ENCODE measurements at regions of chr4 and their contacts with region 1.

Region 1: GRCh38 chr4:54233277-54233696 is 4.2 kb downstream of the PDGFRA start:
- DNase-seq: no peak
- H3K4me3 ChIP-seq: no peak overlapping the region
- H3K27ac ChIP-seq: no peak overlapping the region
- H3K4me1 ChIP-seq: no peaks in the 10 kb centered on the region
- CTCF ChIP-seq: peak; percentile 71

Region 2: DNA sequence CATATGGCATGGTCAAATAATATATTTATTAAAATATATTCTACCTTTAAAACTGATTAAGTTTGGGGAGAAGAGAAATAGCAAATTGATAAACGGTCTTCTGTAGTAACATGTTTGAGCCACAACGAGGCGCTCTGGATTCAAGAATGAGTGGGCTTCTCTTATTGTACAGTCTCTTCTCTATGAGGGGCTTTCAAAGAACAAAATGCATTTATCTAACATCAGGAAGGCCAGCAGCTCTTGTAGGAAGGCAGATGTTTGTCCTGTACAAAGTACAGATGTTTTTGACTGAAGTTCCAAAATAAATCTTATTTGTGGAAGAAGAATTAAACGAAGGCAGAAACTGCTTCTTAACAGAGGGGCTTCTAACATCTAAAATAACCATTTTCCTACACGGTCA is 1217.6 kb before region 1 on chr4:
- CTCF ChIA-PET with region 1: no interaction called
- POLR2A ChIA-PET with region 1: no interaction called
- intact Hi-C with region 1: loop called (anchors 10 kb)
- DNase-seq: peak; percentile 42
- H3K4me3 ChIP-seq: no peak overlapping the region
- H3K27ac ChIP-seq: no peak overlapping the region
- H3K4me1 ChIP-seq: no peaks in the 10 kb centered on the region
- CTCF ChIP-seq: peak; percentile 83

Region 3: DNA sequence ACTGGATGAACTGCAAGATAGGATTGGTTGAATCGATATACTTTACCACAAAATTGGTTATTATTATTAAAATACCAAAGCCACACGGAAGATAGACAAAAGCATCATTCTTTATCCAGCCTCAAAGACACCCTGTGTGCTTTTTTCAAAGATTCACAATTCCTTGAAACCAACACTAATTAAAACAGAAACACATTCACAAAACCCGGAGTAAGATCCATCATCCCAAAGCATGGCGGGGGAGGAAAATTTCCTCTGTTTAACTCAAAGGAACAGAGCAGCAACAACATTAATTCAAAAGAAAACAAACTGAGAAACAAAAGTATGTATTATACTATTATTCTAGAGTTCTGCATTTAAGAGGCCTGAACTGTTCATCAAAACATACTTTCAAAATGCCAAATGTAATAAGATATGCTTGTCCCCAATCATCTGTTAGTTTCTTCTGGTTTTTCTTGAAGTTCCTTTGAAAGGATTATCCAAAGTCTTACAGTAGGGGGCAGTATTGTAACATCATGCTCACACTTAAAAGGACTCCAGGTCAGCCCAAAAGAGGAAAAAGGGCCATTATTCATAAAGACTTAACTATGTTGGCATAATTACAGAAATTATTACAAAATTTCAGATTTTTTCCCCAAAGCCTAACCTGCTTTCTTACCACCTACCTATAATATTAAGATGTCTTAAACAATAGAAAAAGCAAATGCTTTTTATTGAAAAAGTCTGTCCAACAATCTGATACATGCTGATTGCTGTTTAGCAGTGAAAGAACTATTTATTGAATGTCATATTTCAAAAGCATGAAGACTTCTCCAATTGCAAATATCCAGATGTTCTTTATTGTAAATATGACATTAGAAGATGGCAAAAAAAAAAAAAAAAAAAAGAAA is 1036.2 kb before region 1 on chr4:
- CTCF ChIA-PET with region 1: no interaction called
- POLR2A ChIA-PET with region 1: no interaction called
- intact Hi-C with region 1: loop called (anchors 5 kb)
- DNase-seq: peak; percentile 80
- H3K4me3 ChIP-seq: no peak overlapping the region
- H3K27ac ChIP-seq: no peak overlapping the region
- H3K4me1 ChIP-seq: no peaks in the 10 kb centered on the region
- CTCF ChIP-seq: peak; percentile 95

Region 4: GRCh38 chr4:53490965-53491622 is 742.2 kb before region 1 on chr4:
- CTCF ChIA-PET with region 1: interaction called, 3 read pairs
- POLR2A ChIA-PET with region 1: no interaction called
- intact Hi-C with region 1: loop called (anchors 10 kb)
- DNase-seq: peak; percentile 45
- H3K4me3 ChIP-seq: no peak overlapping the region
- H3K27ac ChIP-seq: no peak overlapping the region
- H3K4me1 ChIP-seq: no peaks in the 10 kb centered on the region
- CTCF ChIP-seq: peak; percentile 83

Region 5: DNA sequence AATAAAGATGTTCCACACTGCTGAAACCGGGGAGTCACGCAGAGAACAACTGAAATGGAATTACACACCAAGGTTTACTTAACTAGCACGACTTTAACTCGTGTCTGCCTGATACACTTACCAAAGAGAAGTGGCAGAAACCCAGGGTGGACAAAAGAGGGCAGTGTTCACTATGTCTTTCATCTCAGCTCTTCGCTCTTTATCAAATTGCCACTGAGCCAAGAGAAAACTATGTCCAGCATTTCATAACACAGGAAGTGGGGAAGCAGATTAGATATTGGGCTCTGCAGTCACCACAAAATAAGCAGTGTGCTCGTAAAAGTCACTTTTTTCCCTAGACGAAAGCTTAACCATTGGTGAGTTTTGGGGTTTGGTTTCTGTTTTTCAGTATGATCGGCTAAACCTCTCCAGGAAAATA is 324.6 kb before region 1 on chr4:
- CTCF ChIA-PET with region 1: interaction called, 4 read pairs
- POLR2A ChIA-PET with region 1: interaction called, 4 read pairs
- intact Hi-C with region 1: loop called (anchors 1 kb)
- DNase-seq: peak; percentile 72
- H3K4me3 ChIP-seq: no peak overlapping the region
- H3K27ac ChIP-seq: no peak overlapping the region
- H3K4me1 ChIP-seq: peaks cover 21% of the 10 kb centered on the region
- CTCF ChIP-seq: peak; percentile 91

Region 6: GRCh38 chr4:53929955-53930798 is 303.1 kb before region 1 on chr4:
- CTCF ChIA-PET with region 1: interaction called, 6 read pairs
- POLR2A ChIA-PET with region 1: no interaction called
- intact Hi-C with region 1: loop called (anchors 5 kb)
- DNase-seq: peak; percentile 82
- H3K4me3 ChIP-seq: no peak overlapping the region
- H3K27ac ChIP-seq: no peak overlapping the region
- H3K4me1 ChIP-seq: peaks cover 32% of the 10 kb centered on the region
- CTCF ChIP-seq: peak; percentile 95

Region 7: DNA sequence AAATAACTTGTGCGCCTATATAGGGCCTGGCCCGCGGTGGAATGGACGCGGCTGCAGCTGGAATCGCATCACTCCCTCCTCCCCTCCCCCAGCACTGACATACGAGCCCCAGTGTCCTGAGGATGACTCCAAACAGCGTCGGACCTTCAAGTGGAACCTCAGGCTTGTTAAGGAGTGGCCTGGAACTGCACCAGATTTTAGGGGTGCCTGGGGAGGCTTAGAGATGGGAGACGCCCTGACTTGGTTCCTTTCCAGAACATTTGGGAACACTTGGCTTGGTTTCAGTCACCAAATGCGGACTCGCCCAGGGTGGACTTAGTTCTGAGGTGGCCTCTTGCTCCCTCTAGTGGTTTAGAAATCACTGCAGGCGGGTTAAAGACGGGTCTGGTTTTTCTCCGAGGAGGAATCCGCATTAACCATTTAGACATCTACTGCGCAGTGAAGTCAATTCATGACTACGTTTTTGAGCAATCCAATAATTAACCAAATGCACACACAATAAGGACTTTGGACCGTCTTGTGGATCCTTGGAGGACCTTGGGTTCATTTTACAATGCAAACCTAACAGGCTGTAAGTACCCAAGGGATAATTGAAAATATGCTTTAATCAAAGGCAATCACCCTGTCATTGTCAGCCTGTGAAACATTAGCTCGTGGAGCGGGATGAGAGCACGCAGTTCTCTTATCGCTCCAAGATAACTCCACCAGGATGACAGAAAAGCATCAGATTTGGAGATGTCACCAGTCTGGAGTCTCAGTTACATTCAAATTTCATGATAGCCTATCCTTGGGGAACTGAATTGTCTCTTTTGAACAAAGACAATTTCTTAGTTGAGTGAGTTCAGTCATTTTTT is 15.4 kb before region 1 on chr4:
- CTCF ChIA-PET with region 1: no interaction called
- POLR2A ChIA-PET with region 1: no interaction called
- intact Hi-C with region 1: no loop called
- DNase-seq: peak; percentile 75
- H3K4me3 ChIP-seq: peak overlapping the region; percentile 41
- H3K27ac ChIP-seq: no peak overlapping the region
- H3K4me1 ChIP-seq: peaks cover 3% of the 10 kb centered on the region
- CTCF ChIP-seq: peak; percentile 97

Region 8: GRCh38 chr4:54392479-54392878 is 159.2 kb after region 1 on chr4:
- CTCF ChIA-PET with region 1: no interaction called
- POLR2A ChIA-PET with region 1: no interaction called
- intact Hi-C with region 1: no loop called
- DNase-seq: no peak
- H3K4me3 ChIP-seq: no peak overlapping the region
- H3K27ac ChIP-seq: no peak overlapping the region
- H3K4me1 ChIP-seq: no peaks in the 10 kb centered on the region
- CTCF ChIP-seq: no peak

Region 9: GRCh38 chr4:55754754-55755350 is 1521.6 kb after region 1 on chr4:
- CTCF ChIA-PET with region 1: no interaction called
- POLR2A ChIA-PET with region 1: no interaction called
- intact Hi-C with region 1: no loop called
- DNase-seq: no peak
- H3K4me3 ChIP-seq: no peak overlapping the region
- H3K27ac ChIP-seq: no peak overlapping the region
- H3K4me1 ChIP-seq: no peaks in the 10 kb centered on the region
- CTCF ChIP-seq: no peak

Measured in OCI-LY7 (cell line).